CD8-positive, alpha-beta T cell (primary cell): ENCODE measurements at regions of chr3 and their contacts with region 1.

Region 1: GRCh38 chr3:28317438-28318022 is 31.0 kb upstream of the ZCWPW2 start:
- DNase-seq: peak in 5 of 9 experiments; percentile 9 to 83 (median 44)
- ATAC-seq: peak; percentile 99
- H3K4me3 ChIP-seq: no peak overlapping the region
- H3K4me3 Mint-ChIP-seq: no peak overlapping the region
- H3K27ac ChIP-seq: no peak overlapping the region
- H3K27ac Mint-ChIP-seq: no peak overlapping the region
- H3K4me1 ChIP-seq: no peaks in the 10 kb centered on the region
- H3K4me1 Mint-ChIP-seq: peaks cover 24% of the 10 kb centered on the region
- H3K27me3 ChIP-seq: no peaks in the 10 kb centered on the region
- H3K27me3 Mint-ChIP-seq: no peaks in the 10 kb centered on the region
- CTCF ChIP-seq: peak; percentile 91

Region 2: GRCh38 chr3:28280781-28281180 is 36.7 kb before region 1 on chr3:
- CTCF ChIA-PET with region 1: no interaction called
- POLR2A ChIA-PET with region 1: no interaction called
- intact Hi-C with region 1: no loop called
- DNase-seq: no peak
- ATAC-seq: no peak
- H3K4me3 ChIP-seq: no peak overlapping the region
- H3K4me3 Mint-ChIP-seq: no peak overlapping the region
- H3K27ac ChIP-seq: no peak overlapping the region
- H3K27ac Mint-ChIP-seq: no peak overlapping the region
- H3K4me1 ChIP-seq: no peaks in the 10 kb centered on the region
- H3K4me1 Mint-ChIP-seq: peaks cover 29% of the 10 kb centered on the region
- H3K27me3 ChIP-seq: no peaks in the 10 kb centered on the region
- H3K27me3 Mint-ChIP-seq: no peaks in the 10 kb centered on the region
- CTCF ChIP-seq: no peak

Region 3: DNA sequence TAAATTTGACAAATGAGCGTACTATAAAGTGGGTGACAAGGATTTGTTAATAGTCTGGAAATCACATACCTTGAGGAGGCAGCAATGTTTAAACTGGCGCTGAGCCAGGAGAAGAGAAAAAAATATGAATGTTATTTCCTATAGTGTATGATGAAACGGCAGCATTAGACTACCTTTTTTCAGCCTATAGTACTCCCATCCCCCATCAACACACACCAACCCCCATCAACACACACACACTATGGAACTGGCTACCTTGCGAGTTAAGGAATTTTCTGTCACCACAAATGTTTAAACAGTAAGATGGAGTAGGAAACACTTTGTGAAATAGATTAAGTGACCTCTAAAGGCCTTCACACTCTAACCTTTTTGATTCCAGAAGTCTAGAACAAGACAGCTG is 15.8 kb before region 1 on chr3:
- CTCF ChIA-PET with region 1: interaction called, 3 read pairs
- POLR2A ChIA-PET with region 1: no interaction called
- intact Hi-C with region 1: loop called in 1 of 2 experiments (anchors 2 kb)
- DNase-seq: no peak
- ATAC-seq: no peak
- H3K4me3 ChIP-seq: no peak overlapping the region
- H3K4me3 Mint-ChIP-seq: no peak overlapping the region
- H3K27ac ChIP-seq: no peak overlapping the region
- H3K27ac Mint-ChIP-seq: no peak overlapping the region
- H3K4me1 ChIP-seq: no peaks in the 10 kb centered on the region
- H3K4me1 Mint-ChIP-seq: peaks cover 17% of the 10 kb centered on the region
- H3K27me3 ChIP-seq: no peaks in the 10 kb centered on the region
- H3K27me3 Mint-ChIP-seq: no peaks in the 10 kb centered on the region
- CTCF ChIP-seq: no peak

Region 4: DNA sequence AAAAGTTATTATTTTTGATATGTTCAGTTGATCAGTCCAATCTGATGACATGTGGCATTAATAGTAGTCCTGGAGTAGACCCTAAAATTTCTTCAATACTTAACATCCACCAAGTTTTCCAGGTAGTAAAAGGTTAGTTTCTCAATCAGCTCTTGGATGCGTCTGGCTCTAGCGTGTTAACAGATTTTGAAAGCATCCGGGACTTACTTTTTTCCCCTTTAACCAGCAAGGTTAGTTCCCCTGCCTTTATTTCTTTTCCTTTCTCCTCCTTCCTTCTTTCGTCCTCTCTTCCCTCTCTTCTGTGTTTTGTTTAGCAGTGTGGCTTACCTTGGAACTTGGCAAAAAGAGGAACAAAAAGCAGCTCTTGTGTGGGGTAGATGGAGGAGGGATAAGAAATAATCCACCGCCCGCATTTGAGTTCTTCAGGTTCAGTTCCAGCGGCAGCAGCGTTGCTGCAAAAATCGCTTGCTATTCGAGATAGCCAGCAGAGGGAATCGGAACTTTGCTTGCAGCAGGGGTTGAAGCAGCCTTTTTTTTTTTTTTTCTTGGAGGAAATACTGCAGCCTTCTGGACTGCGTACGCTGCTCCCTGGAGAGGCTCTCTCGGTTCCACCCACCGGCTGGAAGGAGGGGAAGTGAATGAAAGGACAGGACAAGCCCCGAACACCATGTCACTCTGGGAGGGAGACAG is 963.0 kb after region 1 on chr3 and contains the start of gene RBMS3:
- CTCF ChIA-PET with region 1: no interaction called
- POLR2A ChIA-PET with region 1: no interaction called
- intact Hi-C with region 1: no loop called
- DNase-seq: peak in 2 of 9 experiments; percentile 2 to 33
- ATAC-seq: peak; percentile 11
- H3K4me3 ChIP-seq: peak within 1 kb of the TSS; percentile 14 to 45
- H3K4me3 Mint-ChIP-seq: peak within 1 kb of the TSS; percentile 79
- H3K27ac ChIP-seq: no peak within 1 kb of the TSS
- H3K27ac Mint-ChIP-seq: peak within 1 kb of the TSS; percentile 43
- H3K4me1 ChIP-seq: peaks cover 10% of the 10 kb centered on the region
- H3K4me1 Mint-ChIP-seq: peaks cover 27% of the 10 kb centered on the region
- H3K27me3 ChIP-seq: no peaks in the 10 kb centered on the region
- H3K27me3 Mint-ChIP-seq: peaks cover 17% of the 10 kb centered on the region
- CTCF ChIP-seq: no peak
- total RNA-seq, gene RBMS3: 0.56 TPM in 1 of 2 experiments, not detected in the other